ENCODE measurements at regions of chr13 and their contacts with region 1.

Region 1: GRCh38 chr13:99374994-99375737 is 68.0 kb upstream of the GPR183 start:
- DNase-seq: peak; percentile 96
- ATAC-seq: peak; percentile 78
- H3K4me3 ChIP-seq: peak overlapping the region in 4 of 5 experiments; percentile 9 to 42 (median 34)
- H3K4me3 Mint-ChIP-seq: peak overlapping the region; percentile 77
- H3K27ac ChIP-seq: peak overlapping the region; percentile 99 to 100
- H3K27ac Mint-ChIP-seq: peak overlapping the region; percentile 98
- H3K4me1 ChIP-seq: peaks cover 77 to 90% of the 10 kb centered on the region in 2 donors
- H3K4me1 Mint-ChIP-seq: peaks cover 86% of the 10 kb centered on the region
- H3K27me3 ChIP-seq: no peaks in the 10 kb centered on the region
- H3K27me3 Mint-ChIP-seq: no peaks in the 10 kb centered on the region
- CTCF ChIP-seq: no peak

Region 2: GRCh38 chr13:99281811-99282263 is 93.3 kb before region 1 on chr13:
- CTCF ChIA-PET with region 1: interaction called, 477 read pairs
- POLR2A ChIA-PET with region 1: interaction called, 23 read pairs
- intact Hi-C with region 1: loop called (anchors 1 kb)
- DNase-seq: no peak
- ATAC-seq: peak; percentile 82
- H3K4me3 ChIP-seq: peak overlapping the region in 3 of 5 experiments; percentile 15 to 32 (median 31)
- H3K4me3 Mint-ChIP-seq: peak overlapping the region; percentile 73
- H3K27ac ChIP-seq: peak overlapping the region; percentile 85 to 89
- H3K27ac Mint-ChIP-seq: peak overlapping the region; percentile 95
- H3K4me1 ChIP-seq: peaks cover 87 to 88% of the 10 kb centered on the region in 2 donors
- H3K4me1 Mint-ChIP-seq: peaks cover 87% of the 10 kb centered on the region
- H3K27me3 ChIP-seq: no peaks in the 10 kb centered on the region
- H3K27me3 Mint-ChIP-seq: no peaks in the 10 kb centered on the region
- CTCF ChIP-seq: no peak

Region 3: GRCh38 chr13:99307648-99308339 is 67.4 kb before region 1 on chr13:
- CTCF ChIA-PET with region 1: interaction called, 58 read pairs
- POLR2A ChIA-PET with region 1: interaction called, 34 read pairs
- intact Hi-C with region 1: loop called (anchors 1 kb)
- DNase-seq: no peak
- ATAC-seq: peak; percentile 25
- H3K4me3 ChIP-seq: peak overlapping the region; percentile 37 to 97 (median 71)
- H3K4me3 Mint-ChIP-seq: peak overlapping the region; percentile 99
- H3K27ac ChIP-seq: peak overlapping the region; percentile 73 to 87
- H3K27ac Mint-ChIP-seq: peak overlapping the region; percentile 95
- H3K4me1 ChIP-seq: peaks cover 49 to 60% of the 10 kb centered on the region in 2 donors
- H3K4me1 Mint-ChIP-seq: peaks cover 69% of the 10 kb centered on the region
- H3K27me3 ChIP-seq: no peaks in the 10 kb centered on the region
- H3K27me3 Mint-ChIP-seq: no peaks in the 10 kb centered on the region
- CTCF ChIP-seq: no peak

Region 4: DNA sequence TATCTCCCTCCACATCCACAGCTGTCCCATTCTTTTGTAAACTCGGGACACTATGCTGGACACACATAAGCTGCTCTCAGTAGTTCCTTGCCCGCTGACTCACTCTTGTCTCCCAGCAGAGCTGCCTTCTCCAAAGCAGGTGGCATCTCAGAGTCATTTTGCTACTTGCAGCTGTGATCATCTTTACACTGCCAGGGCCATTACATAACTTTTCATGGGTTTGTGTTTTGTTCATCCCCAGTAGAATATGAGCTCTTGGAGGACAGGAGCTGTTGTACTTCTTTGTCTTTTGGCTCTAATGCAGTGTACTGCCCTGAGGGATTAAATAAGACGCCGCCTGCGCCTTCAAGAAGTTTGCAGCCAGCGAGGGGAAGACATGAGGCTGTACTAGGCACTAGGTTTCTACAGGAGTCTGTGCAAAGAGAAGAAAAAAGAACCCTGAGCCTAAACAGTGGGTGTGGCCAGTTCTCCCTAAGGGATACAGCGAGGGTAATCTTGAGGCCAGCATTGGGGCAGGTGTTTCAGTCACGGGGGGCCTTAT is 27.2 kb before region 1 on chr13:
- CTCF ChIA-PET with region 1: interaction called, 14 read pairs
- POLR2A ChIA-PET with region 1: interaction called, 28 read pairs
- intact Hi-C with region 1: no loop called
- DNase-seq: peak; percentile 48
- ATAC-seq: peak; percentile 69
- H3K4me3 ChIP-seq: no peak overlapping the region
- H3K4me3 Mint-ChIP-seq: peak overlapping the region; percentile 57
- H3K27ac ChIP-seq: peak overlapping the region; percentile 13 to 17
- H3K27ac Mint-ChIP-seq: peak overlapping the region; percentile 92
- H3K4me1 ChIP-seq: peaks cover 19 to 43% of the 10 kb centered on the region in 2 donors
- H3K4me1 Mint-ChIP-seq: peaks cover 64% of the 10 kb centered on the region
- H3K27me3 ChIP-seq: no peaks in the 10 kb centered on the region
- H3K27me3 Mint-ChIP-seq: no peaks in the 10 kb centered on the region
- CTCF ChIP-seq: no peak

Region 5: GRCh38 chr13:99417201-99418102 is 42.3 kb after region 1 on chr13:
- CTCF ChIA-PET with region 1: interaction called, 18 read pairs
- POLR2A ChIA-PET with region 1: interaction called, 13 read pairs
- intact Hi-C with region 1: loop called (anchors 1 kb)
- DNase-seq: no peak
- ATAC-seq: no peak
- H3K4me3 ChIP-seq: no peak overlapping the region
- H3K4me3 Mint-ChIP-seq: no peak overlapping the region
- H3K27ac ChIP-seq: no peak overlapping the region
- H3K27ac Mint-ChIP-seq: peak overlapping the region; percentile 67
- H3K4me1 ChIP-seq: peaks cover 51 to 58% of the 10 kb centered on the region in 2 donors
- H3K4me1 Mint-ChIP-seq: peaks cover 48% of the 10 kb centered on the region
- H3K27me3 ChIP-seq: peaks cover 0 to 3% (median 0%) of the 10 kb centered on the region in 4 experiments
- H3K27me3 Mint-ChIP-seq: no peaks in the 10 kb centered on the region
- CTCF ChIP-seq: no peak

Region 6: GRCh38 chr13:99528547-99528946 is 153.4 kb after region 1 on chr13:
- CTCF ChIA-PET with region 1: no interaction called
- POLR2A ChIA-PET with region 1: no interaction called
- intact Hi-C with region 1: no loop called
- DNase-seq: peak; percentile 64
- ATAC-seq: no peak
- H3K4me3 ChIP-seq: no peak overlapping the region
- H3K4me3 Mint-ChIP-seq: no peak overlapping the region
- H3K27ac ChIP-seq: no peak overlapping the region
- H3K27ac Mint-ChIP-seq: no peak overlapping the region
- H3K4me1 ChIP-seq: no peaks in the 10 kb centered on the region
- H3K4me1 Mint-ChIP-seq: peaks cover 11% of the 10 kb centered on the region
- H3K27me3 ChIP-seq: no peaks in the 10 kb centered on the region
- H3K27me3 Mint-ChIP-seq: no peaks in the 10 kb centered on the region
- CTCF ChIP-seq: peak; percentile 52

Region 7: DNA sequence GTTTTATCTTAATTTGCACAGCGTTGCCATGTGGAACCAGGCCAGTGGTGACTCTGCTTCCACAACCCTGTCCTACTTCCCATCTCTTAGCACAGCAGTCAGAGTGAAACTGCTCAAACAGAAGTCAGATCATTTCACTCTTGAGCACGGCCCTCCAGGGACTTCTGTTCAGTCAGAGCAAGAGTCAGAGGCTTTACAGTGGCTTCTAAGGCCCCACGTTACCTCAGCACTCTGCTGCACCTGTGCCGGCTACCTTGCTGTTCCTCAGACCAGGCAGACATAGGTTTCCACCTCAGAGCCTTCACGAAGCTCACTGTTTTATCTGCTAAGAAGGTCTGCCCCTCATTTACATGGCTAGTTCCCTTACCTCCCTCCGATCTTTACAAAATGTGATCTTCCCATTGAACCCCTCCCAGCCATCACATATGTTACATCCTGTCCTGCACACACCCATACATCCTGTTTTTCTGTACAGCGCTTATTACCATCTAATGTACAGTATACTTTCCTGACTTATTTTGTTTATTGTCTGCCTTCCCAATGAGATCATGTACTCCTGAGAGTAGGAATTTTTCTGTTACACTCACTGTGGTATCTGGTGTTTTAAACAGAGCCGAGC is 167.7 kb after region 1 on chr13:
- CTCF ChIA-PET with region 1: interaction called, 4 read pairs
- POLR2A ChIA-PET with region 1: no interaction called
- intact Hi-C with region 1: loop called (anchors 5 kb)
- DNase-seq: peak; percentile 93
- ATAC-seq: peak; percentile 97
- H3K4me3 ChIP-seq: peak overlapping the region in 2 of 5 experiments; percentile 10 to 49
- H3K4me3 Mint-ChIP-seq: peak overlapping the region; percentile 56
- H3K27ac ChIP-seq: peak overlapping the region; percentile 83 to 89
- H3K27ac Mint-ChIP-seq: peak overlapping the region; percentile 89
- H3K4me1 ChIP-seq: peaks cover 31 to 53% of the 10 kb centered on the region in 2 donors
- H3K4me1 Mint-ChIP-seq: peaks cover 50% of the 10 kb centered on the region
- H3K27me3 ChIP-seq: no peaks in the 10 kb centered on the region
- H3K27me3 Mint-ChIP-seq: no peaks in the 10 kb centered on the region
- CTCF ChIP-seq: no peak

Region 8: DNA sequence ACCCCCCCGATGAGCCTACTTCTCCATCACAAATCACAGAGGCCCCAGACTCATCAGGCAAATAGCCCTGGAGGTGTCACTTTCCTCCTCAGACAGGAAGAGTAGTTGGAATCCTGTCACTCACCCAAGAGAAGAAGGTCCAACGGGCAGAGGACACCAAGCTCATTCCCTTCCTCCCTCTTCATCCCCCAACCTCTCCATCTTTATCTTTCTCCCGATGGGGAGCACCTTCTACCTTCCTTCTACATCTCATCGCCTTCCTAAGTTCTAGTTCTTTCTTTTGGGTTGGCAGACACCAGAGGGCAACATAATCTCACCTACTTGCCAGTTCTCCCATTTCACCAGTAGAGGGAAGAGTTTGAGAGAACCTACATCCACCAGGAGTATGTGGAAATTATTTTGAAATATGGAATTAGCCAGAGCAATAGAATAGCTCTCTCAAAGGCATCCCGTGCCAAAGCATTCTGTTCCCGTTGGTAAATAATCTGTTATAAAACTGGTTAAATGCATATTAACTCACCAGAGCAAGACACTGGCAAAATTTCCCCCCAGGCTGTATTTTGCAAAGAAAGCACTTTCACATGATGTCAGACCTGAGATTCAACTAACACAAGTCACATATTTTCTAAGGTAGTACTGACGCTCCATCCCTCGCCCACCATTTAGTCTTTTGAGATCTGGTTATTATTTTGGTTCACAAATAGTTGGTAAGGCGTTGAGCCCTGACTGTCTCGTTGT is 541.4 kb after region 1 on chr13:
- CTCF ChIA-PET with region 1: no interaction called
- POLR2A ChIA-PET with region 1: no interaction called
- intact Hi-C with region 1: no loop called
- DNase-seq: peak; percentile 57
- ATAC-seq: peak; percentile 58
- H3K4me3 ChIP-seq: no peak overlapping the region
- H3K4me3 Mint-ChIP-seq: no peak overlapping the region
- H3K27ac ChIP-seq: no peak overlapping the region
- H3K27ac Mint-ChIP-seq: no peak overlapping the region
- H3K4me1 ChIP-seq: no peaks in the 10 kb centered on the region
- H3K4me1 Mint-ChIP-seq: no peaks in the 10 kb centered on the region
- H3K27me3 ChIP-seq: peaks cover 0 to 18% (median 9%) of the 10 kb centered on the region in 4 experiments
- H3K27me3 Mint-ChIP-seq: peaks cover 14% of the 10 kb centered on the region
- CTCF ChIP-seq: peak; percentile 78

Region 9: DNA sequence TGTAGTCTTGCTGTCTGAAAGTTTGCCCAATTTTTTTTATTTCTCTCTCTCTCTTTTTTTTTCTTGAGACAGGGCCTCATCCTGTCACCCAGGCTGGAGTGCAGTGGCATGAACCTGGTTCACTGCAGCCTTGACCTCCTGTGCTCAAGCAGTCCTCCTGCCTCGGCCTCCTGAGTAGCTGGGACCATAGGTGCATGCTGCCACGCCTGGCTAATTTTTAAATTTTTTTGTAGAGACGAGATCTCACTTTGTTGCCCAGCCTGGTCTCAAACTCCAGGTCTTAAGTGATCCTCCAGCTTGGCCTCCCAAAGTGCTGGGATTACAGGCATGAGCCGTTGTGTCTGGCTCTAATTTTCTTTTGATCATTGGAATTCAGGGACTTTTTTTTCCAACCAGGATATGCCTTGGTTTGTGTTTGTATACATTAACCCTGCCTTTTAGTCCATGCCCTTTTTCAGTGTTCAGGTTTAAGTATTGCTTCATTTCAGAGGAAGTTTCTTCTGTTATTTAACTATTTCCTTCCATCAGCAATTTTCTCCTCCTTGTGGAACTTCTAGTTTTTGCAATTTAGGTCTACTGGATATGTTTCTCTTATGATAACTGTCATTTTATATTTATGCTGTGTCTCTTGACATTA is 915.1 kb after region 1 on chr13:
- CTCF ChIA-PET with region 1: no interaction called
- POLR2A ChIA-PET with region 1: no interaction called
- intact Hi-C with region 1: no loop called
- DNase-seq: no peak
- ATAC-seq: no peak
- H3K4me3 ChIP-seq: no peak overlapping the region
- H3K4me3 Mint-ChIP-seq: no peak overlapping the region
- H3K27ac ChIP-seq: no peak overlapping the region
- H3K27ac Mint-ChIP-seq: no peak overlapping the region
- H3K4me1 ChIP-seq: no peaks in the 10 kb centered on the region
- H3K4me1 Mint-ChIP-seq: no peaks in the 10 kb centered on the region
- H3K27me3 ChIP-seq: no peaks in the 10 kb centered on the region
- H3K27me3 Mint-ChIP-seq: no peaks in the 10 kb centered on the region
- CTCF ChIP-seq: no peak